ENCODE measurements at regions of chr7 and their contacts with region 1.

Region 1: GRCh38 chr7:10889266-10889898 is 84.3 kb upstream of the PHF14 start:
- DNase-seq: peak; percentile 78
- H3K4me3 ChIP-seq: no peak overlapping the region; a peak in 1 of 4 replicates
- H3K27ac ChIP-seq: no peak overlapping the region
- H3K4me1 ChIP-seq: no peaks in the 10 kb centered on the region
- H3K27me3 ChIP-seq: no peaks in the 10 kb centered on the region
- CTCF ChIP-seq: peak; percentile 96
- EP300 ChIP-seq: no peak
- RAD21 ChIP-seq: peak; percentile 97

Region 2: GRCh38 chr7:10205696-10206095 is 683.7 kb before region 1 on chr7:
- CTCF ChIA-PET with region 1: no interaction called
- POLR2A ChIA-PET with region 1: no interaction called
- DNase-seq: no peak
- H3K4me3 ChIP-seq: no peak overlapping the region
- H3K27ac ChIP-seq: no peak overlapping the region
- H3K4me1 ChIP-seq: no peaks in the 10 kb centered on the region
- H3K27me3 ChIP-seq: no peaks in the 10 kb centered on the region
- CTCF ChIP-seq: no peak
- EP300 ChIP-seq: no peak
- RAD21 ChIP-seq: no peak

Region 3: GRCh38 chr7:10632717-10633116 is 256.7 kb before region 1 on chr7:
- CTCF ChIA-PET with region 1: no interaction called
- POLR2A ChIA-PET with region 1: no interaction called
- DNase-seq: no peak
- H3K4me3 ChIP-seq: no peak overlapping the region
- H3K27ac ChIP-seq: no peak overlapping the region
- H3K4me1 ChIP-seq: no peaks in the 10 kb centered on the region
- H3K27me3 ChIP-seq: no peaks in the 10 kb centered on the region
- CTCF ChIP-seq: no peak
- EP300 ChIP-seq: no peak
- RAD21 ChIP-seq: no peak

Region 4: DNA sequence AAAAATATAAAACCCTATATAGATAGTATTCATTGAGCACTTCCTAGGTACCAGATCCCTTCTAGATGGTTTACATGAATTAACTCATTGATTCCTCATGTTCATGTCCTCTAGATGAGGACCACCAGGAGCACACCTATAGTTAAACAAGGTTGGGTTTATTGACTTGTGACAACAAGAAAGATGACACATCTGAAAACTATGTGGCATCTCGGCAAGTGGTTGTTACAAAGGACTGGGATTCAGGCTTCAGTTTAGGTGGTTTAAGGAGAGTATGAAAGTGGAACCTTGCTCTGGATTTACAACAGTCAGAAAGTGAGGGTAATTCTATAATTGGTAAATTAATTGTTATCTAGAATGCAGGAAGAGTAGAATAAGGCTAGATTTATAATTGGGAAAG is 14.7 kb before region 1 on chr7:
- CTCF ChIA-PET with region 1: interaction called, 30 read pairs
- POLR2A ChIA-PET with region 1: no interaction called
- DNase-seq: no peak
- H3K4me3 ChIP-seq: no peak overlapping the region
- H3K27ac ChIP-seq: no peak overlapping the region
- H3K4me1 ChIP-seq: no peaks in the 10 kb centered on the region; a peak in 2 of 4 replicates
- H3K27me3 ChIP-seq: no peaks in the 10 kb centered on the region
- CTCF ChIP-seq: no peak
- EP300 ChIP-seq: no peak
- RAD21 ChIP-seq: no peak

Measured in SK-N-SH (cell line).